Panc1 (cell line): ENCODE measurements at regions of chr1 and their contacts with region 1.

Region 1: GRCh38 chr1:112715264-112716053 is at the start of gene PPM1J:
- DNase-seq: no peak
- ATAC-seq: peak; percentile 82
- H3K4me3 ChIP-seq: peak within 1 kb of the TSS; percentile 53 to 64
- H3K27ac ChIP-seq: no peak within 1 kb of the TSS
- H3K4me1 ChIP-seq: no peaks in the 10 kb centered on the region; the same call in 1 of the 2 replicates
- H3K27me3 ChIP-seq: no peaks in the 10 kb centered on the region
- CTCF ChIP-seq: no peak
- total RNA-seq, gene PPM1J: 0.51 TPM

Region 2: DNA sequence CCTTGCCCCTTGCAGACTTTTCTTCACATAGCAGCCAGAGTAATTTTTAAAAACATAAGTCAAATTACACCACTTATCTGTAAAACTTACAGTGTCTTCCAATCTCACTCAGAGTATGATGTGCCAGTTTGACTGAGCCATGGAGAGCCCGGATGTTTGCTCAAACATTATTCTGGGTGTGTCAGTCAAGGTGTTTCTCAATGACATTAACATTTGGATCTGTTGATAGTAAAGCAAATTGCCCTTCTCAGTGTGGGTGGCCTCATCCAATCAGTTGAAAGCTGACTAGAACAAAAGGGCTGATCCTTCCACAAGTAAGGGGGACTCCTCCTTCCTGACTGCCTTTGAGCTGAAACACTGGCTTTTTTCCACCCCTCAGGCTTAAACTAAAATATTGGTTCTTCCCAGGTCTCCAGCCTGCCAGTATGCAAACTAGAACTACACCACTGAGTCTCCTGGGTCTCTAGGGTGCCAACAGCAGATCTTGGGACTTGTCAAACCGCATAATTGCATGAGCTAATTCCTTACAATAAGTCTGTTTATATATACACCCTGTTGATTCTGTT is 477.4 kb before region 1 on chr1:
- CTCF ChIA-PET with region 1: no interaction called
- POLR2A ChIA-PET with region 1: no interaction called
- in situ Hi-C with region 1: no loop called
- intact Hi-C with region 1: no loop called
- DNase-seq: no peak
- ATAC-seq: no peak
- H3K4me3 ChIP-seq: no peak overlapping the region
- H3K27ac ChIP-seq: no peak overlapping the region
- H3K4me1 ChIP-seq: no peaks in the 10 kb centered on the region
- H3K27me3 ChIP-seq: no peaks in the 10 kb centered on the region; the same call in 1 of the 2 replicates
- CTCF ChIP-seq: no peak

Region 3: GRCh38 chr1:112803906-112804762 is 88.7 kb after region 1 on chr1:
- CTCF ChIA-PET with region 1: interaction called, 39 read pairs
- POLR2A ChIA-PET with region 1: no interaction called
- in situ Hi-C with region 1: no loop called
- intact Hi-C with region 1: loop called (anchors 1 kb)
- DNase-seq: peak; percentile 43
- ATAC-seq: peak; percentile 99
- H3K4me3 ChIP-seq: no peak overlapping the region
- H3K27ac ChIP-seq: no peak overlapping the region
- H3K4me1 ChIP-seq: no peaks in the 10 kb centered on the region
- H3K27me3 ChIP-seq: no peaks in the 10 kb centered on the region
- CTCF ChIP-seq: peak; percentile 89